ENCODE measurements at regions of chr17 and their contacts with region 1.

Region 1: GRCh38 chr17:76408052-76408849 is 23.8 kb downstream of the SPHK1 start:
- DNase-seq: peak; percentile 84
- H3K4me3 Mint-ChIP-seq: no peak overlapping the region
- H3K27ac Mint-ChIP-seq: no peak overlapping the region
- H3K4me1 Mint-ChIP-seq: no peaks in the 10 kb centered on the region
- H3K27me3 Mint-ChIP-seq: no peaks in the 10 kb centered on the region
- CTCF ChIP-seq: peak; percentile 55

Region 2: GRCh38 chr17:76458580-76459490 is 50.6 kb after region 1 on chr17:
- CTCF ChIA-PET with region 1: interaction called, 22 read pairs
- intact Hi-C with region 1: loop called (anchors 1 kb)
- DNase-seq: peak; percentile 70
- H3K4me3 Mint-ChIP-seq: no peak overlapping the region
- H3K27ac Mint-ChIP-seq: no peak overlapping the region
- H3K4me1 Mint-ChIP-seq: no peaks in the 10 kb centered on the region
- H3K27me3 Mint-ChIP-seq: no peaks in the 10 kb centered on the region
- CTCF ChIP-seq: peak; percentile 24

Region 3: GRCh38 chr17:76481071-76481655 is 72.9 kb after region 1 on chr17:
- CTCF ChIA-PET with region 1: no interaction called
- intact Hi-C with region 1: no loop called
- DNase-seq: no peak
- H3K4me3 Mint-ChIP-seq: no peak overlapping the region
- H3K27ac Mint-ChIP-seq: no peak overlapping the region
- H3K4me1 Mint-ChIP-seq: no peaks in the 10 kb centered on the region
- H3K27me3 Mint-ChIP-seq: no peaks in the 10 kb centered on the region
- CTCF ChIP-seq: no peak

Region 4: DNA sequence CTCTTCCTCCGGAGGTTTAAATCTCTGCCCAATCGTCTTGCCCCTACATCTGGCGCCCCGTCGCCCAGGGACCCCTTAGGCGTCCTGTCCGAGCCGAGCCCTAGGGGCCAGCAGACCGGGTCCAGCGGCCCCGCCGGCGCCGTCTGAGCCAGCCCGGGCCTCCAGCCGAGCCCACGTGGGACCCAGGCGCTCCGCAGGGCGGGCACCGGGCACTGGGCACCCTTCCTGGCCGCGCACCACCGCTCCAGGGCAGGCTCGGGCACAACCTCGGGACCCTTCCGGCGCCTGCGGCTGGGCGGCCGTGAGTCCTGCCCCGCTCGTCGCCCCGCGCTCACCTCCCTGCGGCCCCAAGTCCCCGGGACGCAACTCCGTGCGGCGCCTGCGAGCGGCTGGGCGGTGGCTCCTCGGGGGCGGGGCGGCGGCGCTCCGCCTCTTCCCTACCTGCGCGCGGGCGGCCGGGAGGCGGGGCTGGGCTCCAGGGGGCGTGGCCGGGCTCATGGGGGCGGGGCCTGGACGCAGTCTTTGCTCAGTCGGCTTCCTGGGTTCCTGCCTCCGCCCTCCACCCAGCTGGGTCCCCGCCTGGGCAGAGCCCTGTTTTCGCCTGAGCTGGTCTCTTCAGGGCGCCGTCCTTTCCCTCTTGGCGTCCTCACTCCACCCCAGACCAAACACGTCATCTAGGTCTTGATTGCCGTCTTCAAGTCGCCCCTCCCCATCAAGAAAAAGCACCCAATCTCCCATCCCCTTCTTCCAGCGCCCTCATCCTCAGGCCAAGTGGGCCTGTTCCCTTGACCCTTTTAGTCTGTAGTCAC is 93.0 kb after region 1 on chr17 and contains the start of gene RHBDF2:
- CTCF ChIA-PET with region 1: no interaction called
- intact Hi-C with region 1: loop called (anchors 5 kb)
- DNase-seq: peak; percentile 98
- H3K4me3 Mint-ChIP-seq: peak within 1 kb of the TSS; percentile 88
- H3K27ac Mint-ChIP-seq: peak within 1 kb of the TSS; percentile 81
- H3K4me1 Mint-ChIP-seq: peaks cover 44% of the 10 kb centered on the region
- H3K27me3 Mint-ChIP-seq: no peaks in the 10 kb centered on the region
- CTCF ChIP-seq: no peak
- total RNA-seq, gene RHBDF2: 47.7 and 47.9 TPM in 2 replicates

Measured in Calu3 (cell line).